Activated naive CD4-positive, alpha-beta T cell treated with anti-CD3 and anti-CD28 coated beads, Interleukin-2, amount 10 ng/mL, durations not matched to agents 7 days and 5 days (primary cell): ENCODE measurements at regions of chr12 and their contacts with region 1.

Region 1: DNA sequence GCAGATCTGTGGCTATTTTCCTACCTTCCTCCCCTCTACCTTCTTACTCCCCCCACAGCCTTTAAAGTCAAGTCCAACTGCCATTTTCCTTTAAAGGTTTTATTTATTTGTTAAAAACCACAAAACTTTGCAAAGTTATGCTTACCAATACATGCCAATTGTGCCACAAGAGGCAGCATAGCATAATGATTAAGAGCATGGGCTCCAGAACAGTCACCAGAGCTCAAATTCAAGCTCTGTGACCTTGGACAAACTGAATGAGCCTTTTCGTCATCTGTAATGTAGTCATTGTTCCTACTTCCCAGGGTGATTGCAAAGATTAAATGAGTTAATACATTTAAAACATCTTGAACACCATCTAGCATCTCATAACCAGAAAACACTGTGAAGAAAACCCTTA is 13.0 kb upstream of the FMNL3 start:
- DNase-seq: no peak
- H3K4me3 Mint-ChIP-seq: no peak overlapping the region
- H3K27ac Mint-ChIP-seq: no peak overlapping the region
- H3K4me1 Mint-ChIP-seq: no peaks in the 10 kb centered on the region
- H3K27me3 Mint-ChIP-seq: peaks cover 42% of the 10 kb centered on the region

Region 2: GRCh38 chr12:49740930-49741881 is 21.0 kb after region 1 on chr12 and contains the start of gene TMBIM6:
- CTCF ChIA-PET with region 1: interaction called, 12 read pairs
- DNase-seq: peak; percentile 99
- H3K4me3 Mint-ChIP-seq: peak within 1 kb of the TSS; percentile 80
- H3K27ac Mint-ChIP-seq: peak within 1 kb of the TSS; percentile 97
- H3K4me1 Mint-ChIP-seq: peaks cover 40% of the 10 kb centered on the region
- H3K27me3 Mint-ChIP-seq: peaks cover 4% of the 10 kb centered on the region